ENCODE measurements at regions of chr5 and their contacts with region 1.

Region 1: DNA sequence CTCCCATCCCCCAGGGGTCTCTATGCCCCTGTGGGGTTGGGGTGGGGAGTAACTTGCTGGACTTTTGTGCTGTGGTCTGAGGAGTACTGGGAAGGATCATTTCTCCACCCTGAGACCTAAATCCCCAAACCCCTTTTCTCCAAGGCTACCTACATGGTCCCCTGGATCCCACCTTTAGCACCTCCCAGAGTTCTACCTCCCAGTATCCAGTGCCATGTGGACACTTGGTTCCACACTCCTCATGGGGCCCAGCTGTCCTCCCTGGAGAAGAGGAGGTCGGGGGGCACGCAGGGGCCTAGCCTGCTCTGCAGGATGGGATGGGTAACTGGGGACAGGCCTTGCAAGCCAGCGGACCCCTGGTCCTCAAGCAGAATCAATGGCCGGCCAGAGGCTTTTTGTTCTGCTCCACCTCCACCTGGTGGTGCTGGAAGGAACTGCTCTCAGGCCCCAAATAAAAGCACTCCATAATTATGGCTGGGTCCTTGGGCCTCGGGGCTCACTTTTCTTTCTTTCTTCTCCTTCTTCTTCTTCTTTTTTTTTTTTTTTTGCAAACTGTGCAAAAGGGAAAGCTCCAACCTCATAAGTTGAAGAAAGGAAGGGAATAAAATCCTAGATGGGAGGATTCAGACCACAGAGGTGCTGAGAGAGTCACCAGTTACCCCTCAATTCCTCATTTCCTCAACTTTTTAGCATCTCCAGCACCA is 68.4 kb downstream of the PSD2 start:
- DNase-seq: peak; percentile 57
- H3K4me3 ChIP-seq: no peak overlapping the region
- H3K27ac ChIP-seq: no peak overlapping the region
- H3K4me1 ChIP-seq: no peaks in the 10 kb centered on the region
- H3K27me3 ChIP-seq: peaks cover 6 to 12% of the 10 kb centered on the region in 2 experiments
- CTCF ChIP-seq: peak; percentile 75 to 88
- POLR2A ChIP-seq: no peak

Region 2: GRCh38 chr5:139204196-139204595 is 659.8 kb before region 1 on chr5:
- CTCF ChIA-PET with region 1: no interaction called
- POLR2A ChIA-PET with region 1: no interaction called
- dilution Hi-C with region 1: no loop called
- intact Hi-C with region 1: no loop called
- DNase-seq: no peak
- H3K4me3 ChIP-seq: no peak overlapping the region
- H3K27ac ChIP-seq: no peak overlapping the region
- H3K4me1 ChIP-seq: no peaks in the 10 kb centered on the region
- H3K27me3 ChIP-seq: peaks cover 5 to 17% of the 10 kb centered on the region in 2 experiments
- CTCF ChIP-seq: no peak
- POLR2A ChIP-seq: no peak

Region 3: DNA sequence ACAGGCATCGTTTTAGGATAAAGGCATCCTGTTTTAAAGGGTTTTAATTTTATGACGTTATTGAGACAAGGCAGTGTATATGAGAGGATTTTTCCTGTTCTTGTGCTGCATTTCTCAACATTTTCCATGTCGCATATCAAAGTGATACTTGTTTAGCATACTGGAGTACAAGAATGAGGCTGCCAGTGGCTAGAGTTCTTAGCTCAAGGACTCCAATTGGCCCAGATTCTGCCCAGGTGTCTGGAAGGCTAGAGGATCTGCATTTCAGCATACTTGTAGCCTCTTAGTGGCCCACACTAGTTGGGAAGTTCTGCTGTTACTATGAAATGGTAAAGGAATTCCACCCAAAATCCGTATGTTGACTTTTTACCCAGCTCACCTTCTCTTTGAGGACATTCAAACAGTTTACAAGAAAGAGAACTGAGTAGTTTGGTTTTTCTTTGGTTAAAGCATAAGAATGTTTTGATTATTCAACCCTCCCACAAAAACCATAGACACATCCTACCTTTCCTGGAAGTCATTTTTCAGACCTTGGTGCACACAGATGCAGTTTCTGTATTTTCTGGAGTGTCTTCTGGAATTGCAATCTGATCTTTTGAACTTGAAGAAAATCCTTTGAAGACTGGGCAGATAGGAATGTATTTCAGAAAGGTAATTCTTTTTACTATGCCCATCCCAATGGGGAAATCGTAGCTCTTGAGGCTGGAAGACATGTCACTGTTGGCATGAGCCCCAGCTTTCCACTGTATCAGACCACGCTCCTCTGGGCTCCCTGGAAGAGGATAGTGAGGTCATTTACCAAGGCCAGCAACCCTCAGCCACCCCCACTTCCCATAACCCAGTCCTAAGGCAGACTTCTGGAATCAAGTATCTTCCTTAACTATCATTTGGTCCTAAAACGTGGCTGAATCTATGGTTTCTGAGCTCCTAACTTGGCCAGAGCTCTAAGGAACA is 492.2 kb before region 1 on chr5:
- CTCF ChIA-PET with region 1: no interaction called
- POLR2A ChIA-PET with region 1: no interaction called
- dilution Hi-C with region 1: no loop called
- intact Hi-C with region 1: no loop called
- DNase-seq: no peak
- H3K4me3 ChIP-seq: no peak overlapping the region
- H3K27ac ChIP-seq: no peak overlapping the region
- H3K4me1 ChIP-seq: no peaks in the 10 kb centered on the region
- H3K27me3 ChIP-seq: no peaks in the 10 kb centered on the region
- CTCF ChIP-seq: no peak
- POLR2A ChIP-seq: no peak

Region 4: GRCh38 chr5:139633295-139634027 is 230.5 kb before region 1 on chr5:
- CTCF ChIA-PET with region 1: no interaction called
- POLR2A ChIA-PET with region 1: no interaction called
- dilution Hi-C with region 1: no loop called
- intact Hi-C with region 1: no loop called
- DNase-seq: peak; percentile 85
- H3K4me3 ChIP-seq: no peak overlapping the region
- H3K27ac ChIP-seq: no peak overlapping the region
- H3K4me1 ChIP-seq: peaks cover 22% of the 10 kb centered on the region
- H3K27me3 ChIP-seq: no peaks in the 10 kb centered on the region
- CTCF ChIP-seq: peak; percentile 93 to 95
- POLR2A ChIP-seq: no peak

Region 5: DNA sequence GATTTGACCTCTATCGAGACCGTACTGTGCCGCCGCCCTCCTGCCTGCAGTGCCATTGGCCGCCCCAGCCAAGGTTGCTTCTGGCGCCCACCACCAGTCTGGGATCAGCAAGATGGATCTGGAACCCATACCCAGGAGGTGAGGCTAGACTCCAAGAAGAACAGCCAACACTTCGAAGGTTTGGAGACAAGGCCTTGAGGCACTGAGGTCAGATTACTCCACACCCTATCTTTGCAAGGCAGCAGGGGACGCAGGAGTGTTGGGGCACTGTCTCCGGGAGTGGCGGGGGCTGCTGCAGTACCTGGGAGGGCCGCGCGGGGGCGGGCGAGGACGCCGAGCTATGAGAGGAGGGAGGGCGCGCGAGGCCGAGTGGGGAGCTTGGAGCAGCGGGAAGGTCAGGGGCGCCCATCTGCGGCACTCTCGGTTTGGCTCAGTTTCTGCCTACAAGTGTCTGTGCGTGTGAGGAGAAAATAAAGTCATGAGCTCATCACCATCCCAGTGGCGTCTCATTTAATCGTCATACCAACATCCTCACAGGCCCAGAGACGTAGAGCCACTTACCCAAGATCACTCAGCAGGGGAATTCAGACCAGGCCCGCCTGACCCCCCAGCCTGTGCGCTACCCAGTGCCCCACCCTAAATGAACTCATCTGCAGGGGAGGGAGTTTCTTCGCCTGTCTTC is 88.9 kb before region 1 on chr5:
- CTCF ChIA-PET with region 1: interaction called, 19 read pairs
- POLR2A ChIA-PET with region 1: no interaction called
- dilution Hi-C with region 1: no loop called
- intact Hi-C with region 1: no loop called
- DNase-seq: peak; percentile 47
- H3K4me3 ChIP-seq: no peak overlapping the region
- H3K27ac ChIP-seq: no peak overlapping the region
- H3K4me1 ChIP-seq: no peaks in the 10 kb centered on the region
- H3K27me3 ChIP-seq: peaks cover 7 to 13% of the 10 kb centered on the region in 2 experiments
- CTCF ChIP-seq: peak; percentile 90 to 94
- POLR2A ChIP-seq: no peak

Region 6: GRCh38 chr5:139844472-139845145 is 19.4 kb before region 1 on chr5:
- CTCF ChIA-PET with region 1: interaction called, 6 read pairs
- POLR2A ChIA-PET with region 1: no interaction called
- dilution Hi-C with region 1: no loop called
- intact Hi-C with region 1: loop called (anchors 1 kb)
- DNase-seq: peak; percentile 62
- H3K4me3 ChIP-seq: no peak overlapping the region
- H3K27ac ChIP-seq: no peak overlapping the region
- H3K4me1 ChIP-seq: no peaks in the 10 kb centered on the region
- H3K27me3 ChIP-seq: peaks cover 4 to 7% of the 10 kb centered on the region in 2 experiments
- CTCF ChIP-seq: peak; percentile 83 to 94
- POLR2A ChIP-seq: no peak